Activated CD4-positive, alpha-beta T cell treated with anti-CD3 and anti-CD28 coated beads for 36 hours (primary cell): ENCODE measurements at regions of chrX and their contacts with region 1.

Region 1: DNA sequence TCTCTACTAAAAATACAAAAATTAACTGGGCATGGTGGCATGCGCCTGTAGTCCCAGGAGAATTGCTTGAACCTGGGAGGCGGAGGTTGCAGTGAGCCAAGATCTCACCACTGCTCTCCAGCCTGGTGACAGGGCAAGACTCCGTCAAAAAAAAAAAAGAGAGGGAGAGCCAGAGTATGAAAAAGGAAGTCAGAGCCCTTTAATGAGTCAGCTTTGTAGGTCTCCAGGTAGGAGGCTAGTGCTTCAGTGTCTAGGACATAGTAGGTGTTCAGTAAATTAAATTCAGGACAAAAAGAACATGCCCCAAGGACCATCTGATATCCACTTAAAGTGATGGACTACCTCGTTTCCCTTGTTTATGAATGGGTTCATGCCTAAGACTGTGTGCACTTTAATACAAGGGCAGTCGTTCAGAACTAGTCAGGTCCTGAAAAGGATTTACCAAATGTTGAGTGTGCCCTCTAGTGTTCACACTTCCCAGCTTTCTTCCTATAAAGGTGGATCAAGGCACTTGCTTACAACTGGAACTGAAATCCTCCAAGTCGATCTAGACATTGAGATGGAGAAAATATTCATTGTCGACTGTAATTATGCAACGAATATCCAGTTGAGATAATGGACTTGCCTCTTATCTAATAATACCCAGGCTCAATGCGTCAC is 29.0 kb downstream of the F9 start:
- DNase-seq: peak; percentile 23
- ATAC-seq: no peak
- H3K4me3 Mint-ChIP-seq: no peak overlapping the region
- H3K27ac Mint-ChIP-seq: no peak overlapping the region
- H3K4me1 Mint-ChIP-seq: peaks cover 3% of the 10 kb centered on the region
- H3K27me3 Mint-ChIP-seq: no peaks in the 10 kb centered on the region

Region 2: GRCh38 chrX:138775517-138775916 is 784.0 kb before region 1 on chrX:
- CTCF ChIA-PET with region 1: no interaction called
- POLR2A ChIA-PET with region 1: no interaction called
- intact Hi-C with region 1: loop called (anchors 2 to 10 kb)
- DNase-seq: no peak
- ATAC-seq: no peak
- H3K4me3 Mint-ChIP-seq: no peak overlapping the region
- H3K27ac Mint-ChIP-seq: no peak overlapping the region
- H3K4me1 Mint-ChIP-seq: no peaks in the 10 kb centered on the region
- H3K27me3 Mint-ChIP-seq: no peaks in the 10 kb centered on the region

Region 3: DNA sequence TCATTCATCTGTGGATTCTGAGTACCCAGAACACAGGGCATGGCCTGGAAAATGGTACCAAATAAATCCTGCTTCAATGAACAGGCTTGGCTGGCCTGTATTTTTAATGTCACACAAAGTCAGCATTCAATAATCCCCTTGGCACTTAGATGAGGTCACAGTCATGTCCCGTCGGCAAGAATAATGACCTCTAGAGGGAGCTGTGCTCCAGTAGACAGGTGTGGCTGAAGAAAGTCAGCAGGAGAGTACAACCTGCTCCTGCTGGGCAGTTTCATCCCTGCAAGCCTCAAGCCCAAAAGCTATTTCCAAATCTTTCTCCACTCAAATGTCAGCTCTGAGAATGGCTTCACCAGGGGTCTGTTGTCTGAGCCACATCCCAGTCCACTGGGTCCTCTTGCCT is 433.0 kb before region 1 on chrX:
- CTCF ChIA-PET with region 1: interaction called, 3 read pairs
- POLR2A ChIA-PET with region 1: no interaction called
- intact Hi-C with region 1: loop called in 1 of 2 experiments (anchors 2 kb)
- DNase-seq: peak; percentile 25
- ATAC-seq: no peak
- H3K4me3 Mint-ChIP-seq: no peak overlapping the region
- H3K27ac Mint-ChIP-seq: no peak overlapping the region
- H3K4me1 Mint-ChIP-seq: no peaks in the 10 kb centered on the region
- H3K27me3 Mint-ChIP-seq: no peaks in the 10 kb centered on the region